MCF 10A (cell line): ENCODE measurements at regions of chr5 and their contacts with region 1.

Region 1: DNA sequence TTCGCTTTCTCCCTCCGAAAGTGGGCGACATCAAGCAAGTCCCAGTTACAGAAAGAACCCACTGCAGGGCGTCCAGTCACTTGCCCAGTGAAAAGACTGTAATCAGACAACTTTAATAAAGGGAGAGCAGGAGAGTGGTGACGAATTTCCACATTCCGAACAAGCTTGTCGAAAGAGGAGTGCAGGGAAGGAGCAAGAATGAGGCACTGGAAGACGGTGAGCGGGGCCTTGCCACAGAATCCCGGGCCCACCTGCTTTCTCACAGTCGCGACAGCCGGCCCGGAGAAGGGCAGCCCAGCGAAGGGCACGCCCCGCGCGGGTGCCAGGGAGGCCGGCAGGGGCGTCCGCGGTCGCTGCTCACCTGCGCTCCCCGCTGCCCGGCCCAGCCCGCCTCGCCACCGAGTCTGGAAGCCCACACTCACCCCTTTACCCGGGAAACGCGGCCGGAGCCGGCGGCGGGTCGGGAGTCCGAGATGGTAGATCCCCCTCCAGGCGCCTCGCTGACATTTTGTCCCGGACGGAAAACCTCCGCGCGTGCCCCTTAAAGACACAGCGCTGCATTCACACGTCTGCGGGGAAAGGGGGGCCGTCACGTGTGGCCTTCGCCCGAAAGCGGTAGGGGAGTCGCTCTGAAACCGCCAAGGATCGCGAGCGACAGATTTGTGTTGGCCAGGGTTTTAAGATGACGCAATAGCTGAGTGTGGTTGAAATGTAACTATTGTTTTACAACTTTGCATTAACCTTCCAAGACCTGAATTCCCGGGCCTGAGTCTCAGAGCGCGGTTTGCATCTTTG is at the start of gene ZBED3:
- DNase-seq: peak; percentile 86
- H3K4me3 Mint-ChIP-seq: peak within 1 kb of the TSS; percentile 86
- H3K27ac Mint-ChIP-seq: peak within 1 kb of the TSS; percentile 83
- H3K4me1 Mint-ChIP-seq: peaks cover 11% of the 10 kb centered on the region
- H3K27me3 Mint-ChIP-seq: no peaks in the 10 kb centered on the region
- CTCF ChIP-seq: no peak
- total RNA-seq, gene ZBED3: 9.8 and 14.8 TPM in 2 replicates

Region 2: DNA sequence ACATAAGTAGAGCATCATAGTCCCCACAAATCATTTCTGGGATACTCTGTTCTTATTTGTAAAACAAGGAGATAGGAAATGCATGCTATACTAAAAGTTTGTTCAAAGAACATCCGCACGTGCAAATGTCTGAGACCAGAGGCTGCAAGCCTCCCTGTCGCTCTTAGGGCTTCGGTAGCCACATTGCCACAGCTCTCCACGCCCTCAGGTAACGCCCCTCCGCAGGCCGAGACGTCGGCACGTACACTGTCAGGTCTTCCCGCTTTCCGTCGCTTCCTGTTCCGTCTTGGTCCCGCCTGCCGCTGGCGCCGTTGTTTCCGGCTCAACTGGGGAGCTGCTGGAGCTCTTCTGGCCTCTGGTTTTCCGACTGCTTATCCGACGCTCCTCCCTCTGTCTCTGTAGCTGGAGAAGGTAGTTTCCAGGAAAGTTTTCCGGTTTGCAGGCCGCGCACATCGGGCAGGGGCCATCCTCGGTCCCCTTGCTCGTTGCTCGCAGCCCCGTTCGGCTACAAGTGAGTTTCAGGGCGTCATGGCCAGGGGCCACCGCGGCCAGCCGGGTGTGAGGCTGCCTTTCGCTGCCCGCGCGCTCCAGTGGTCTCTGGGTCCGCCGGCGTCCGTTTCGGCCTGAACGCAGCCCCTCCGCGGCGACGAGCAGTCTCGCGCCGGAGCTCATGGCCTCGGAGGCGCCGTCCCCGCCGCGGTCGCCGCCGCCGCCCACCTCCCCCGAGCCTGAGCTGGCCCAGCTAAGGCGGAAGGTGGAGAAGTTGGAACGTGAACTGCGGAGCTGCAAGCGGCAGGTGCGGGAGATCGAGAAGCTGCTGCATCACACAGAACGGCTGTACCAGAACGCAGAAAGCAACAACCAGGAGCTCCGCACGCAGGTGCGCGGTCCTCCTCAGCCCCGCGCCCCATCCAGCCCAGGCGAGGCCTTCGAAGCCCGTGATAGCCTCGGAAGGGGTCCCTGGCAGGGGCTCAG is 56.5 kb before region 1 on chr5 and contains the start of gene AGGF1:
- CTCF ChIA-PET with region 1: no interaction called
- POLR2A ChIA-PET with region 1: interaction called, 11 read pairs
- intact Hi-C with region 1: no loop called
- DNase-seq: peak; percentile 91
- H3K4me3 Mint-ChIP-seq: peak within 1 kb of the TSS; percentile 95
- H3K27ac Mint-ChIP-seq: peak within 1 kb of the TSS; percentile 89
- H3K4me1 Mint-ChIP-seq: no peaks in the 10 kb centered on the region
- H3K27me3 Mint-ChIP-seq: no peaks in the 10 kb centered on the region
- CTCF ChIP-seq: no peak
- total RNA-seq, gene AGGF1: 19.5 and 21.8 TPM in 2 replicates

Region 3: GRCh38 chr5:77133061-77133758 is 46.3 kb after region 1 on chr5:
- CTCF ChIA-PET with region 1: interaction called, 3 read pairs
- POLR2A ChIA-PET with region 1: interaction called, 14 read pairs
- intact Hi-C with region 1: loop called (anchors 5 kb)
- DNase-seq: peak; percentile 99
- H3K4me3 Mint-ChIP-seq: no peak overlapping the region
- H3K27ac Mint-ChIP-seq: peak overlapping the region; percentile 14
- H3K4me1 Mint-ChIP-seq: peaks cover 20% of the 10 kb centered on the region
- H3K27me3 Mint-ChIP-seq: no peaks in the 10 kb centered on the region
- CTCF ChIP-seq: no peak

Region 4: DNA sequence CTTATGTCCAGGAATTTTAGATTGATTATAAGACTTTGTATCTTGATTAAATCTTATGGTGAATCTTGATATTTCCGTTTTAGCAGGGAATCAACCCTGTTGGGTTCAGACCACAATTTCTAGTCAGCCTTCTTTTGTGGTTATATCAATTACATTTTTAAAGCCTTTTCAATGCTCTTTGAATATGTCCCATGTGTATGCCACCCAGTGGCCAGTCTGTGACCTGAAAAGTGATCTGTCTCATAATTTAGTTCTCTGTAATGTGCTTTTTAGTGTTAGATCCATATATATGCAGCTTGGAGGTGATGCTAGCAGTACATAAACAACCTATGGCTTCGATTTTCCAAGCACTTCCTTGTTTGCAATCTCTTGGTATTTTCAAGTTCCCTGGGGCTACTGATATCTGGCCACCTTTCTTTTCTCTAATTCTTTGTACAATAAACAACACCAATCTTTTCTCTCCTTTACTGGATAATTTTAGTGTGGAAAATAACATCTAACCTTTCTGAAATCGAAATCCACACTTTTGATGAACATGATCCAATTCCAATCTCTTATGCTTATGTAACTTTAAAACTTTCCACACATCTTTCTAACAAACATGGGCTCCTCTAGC is 152.3 kb after region 1 on chr5:
- CTCF ChIA-PET with region 1: interaction called, 4 read pairs
- POLR2A ChIA-PET with region 1: no interaction called
- intact Hi-C with region 1: loop called (anchors 5 kb)
- DNase-seq: peak; percentile 31
- H3K4me3 Mint-ChIP-seq: no peak overlapping the region
- H3K27ac Mint-ChIP-seq: no peak overlapping the region
- H3K4me1 Mint-ChIP-seq: no peaks in the 10 kb centered on the region
- H3K27me3 Mint-ChIP-seq: peaks cover 9% of the 10 kb centered on the region
- CTCF ChIP-seq: no peak

Region 5: GRCh38 chr5:77292026-77292757 is 205.3 kb after region 1 on chr5:
- CTCF ChIA-PET with region 1: no interaction called
- POLR2A ChIA-PET with region 1: no interaction called
- intact Hi-C with region 1: no loop called
- DNase-seq: no peak
- H3K4me3 Mint-ChIP-seq: no peak overlapping the region
- H3K27ac Mint-ChIP-seq: no peak overlapping the region
- H3K4me1 Mint-ChIP-seq: no peaks in the 10 kb centered on the region
- H3K27me3 Mint-ChIP-seq: peaks cover 12% of the 10 kb centered on the region
- CTCF ChIP-seq: no peak

Region 6: GRCh38 chr5:77390795-77391194 is 303.9 kb after region 1 on chr5:
- CTCF ChIA-PET with region 1: no interaction called
- POLR2A ChIA-PET with region 1: no interaction called
- intact Hi-C with region 1: no loop called
- DNase-seq: peak; percentile 63
- H3K4me3 Mint-ChIP-seq: no peak overlapping the region
- H3K27ac Mint-ChIP-seq: no peak overlapping the region
- H3K4me1 Mint-ChIP-seq: no peaks in the 10 kb centered on the region
- H3K27me3 Mint-ChIP-seq: no peaks in the 10 kb centered on the region
- CTCF ChIP-seq: no peak